Activated CD8-positive, alpha-beta T cell treated with anti-CD3 and anti-CD28 coated beads for 36 hours (primary cell): ENCODE measurements at regions of chr17 and their contacts with region 1.

Region 1: DNA sequence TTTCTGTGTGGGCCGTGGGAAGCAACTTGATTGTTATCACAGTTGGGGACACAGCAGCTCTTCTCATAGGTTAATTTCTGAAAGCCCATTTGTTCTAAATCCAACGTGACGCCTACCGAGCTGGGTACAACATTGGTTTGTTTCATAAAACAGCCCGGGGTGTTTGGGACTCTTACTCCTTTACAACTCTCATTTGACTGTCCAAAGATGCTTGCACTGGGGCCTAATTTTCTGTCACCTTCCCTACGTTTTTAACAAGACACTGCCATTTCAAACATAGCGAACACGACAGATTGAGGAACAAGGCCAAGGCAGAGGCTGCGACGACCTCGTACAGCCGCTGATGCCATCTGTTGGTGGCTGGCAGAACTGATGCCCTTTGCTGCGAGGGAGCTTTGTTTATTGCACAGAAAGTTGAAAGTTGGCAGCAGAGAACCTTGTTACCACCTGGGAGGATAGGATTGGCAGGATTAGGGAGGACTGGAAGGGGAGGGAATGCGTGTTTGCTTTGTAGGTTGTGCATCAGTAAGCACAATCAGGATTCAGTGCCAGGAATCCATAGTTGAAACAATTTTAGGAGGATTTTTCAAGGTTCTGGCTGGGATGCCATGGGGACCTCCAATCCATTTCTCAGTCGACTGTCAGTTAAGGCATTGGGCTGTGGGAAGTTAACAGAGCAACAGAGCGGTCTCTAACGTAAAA is 98.3 kb downstream of the PITPNC1 start:
- DNase-seq: peak; percentile 92
- ATAC-seq: peak; percentile 71
- H3K4me3 Mint-ChIP-seq: peak overlapping the region; percentile 68
- H3K27ac Mint-ChIP-seq: peak overlapping the region; percentile 92
- H3K4me1 Mint-ChIP-seq: peaks cover 67% of the 10 kb centered on the region
- H3K27me3 Mint-ChIP-seq: no peaks in the 10 kb centered on the region
- CTCF ChIP-seq: peak; percentile 87

Region 2: GRCh38 chr17:67260170-67261011 is 215.0 kb before region 1 on chr17:
- CTCF ChIA-PET with region 1: no interaction called
- POLR2A ChIA-PET with region 1: no interaction called
- intact Hi-C with region 1: no loop called
- DNase-seq: no peak
- ATAC-seq: no peak
- H3K4me3 Mint-ChIP-seq: no peak overlapping the region
- H3K27ac Mint-ChIP-seq: no peak overlapping the region
- H3K4me1 Mint-ChIP-seq: peaks cover 24% of the 10 kb centered on the region
- H3K27me3 Mint-ChIP-seq: no peaks in the 10 kb centered on the region
- CTCF ChIP-seq: no peak

Region 3: GRCh38 chr17:67272312-67273050 is 202.9 kb before region 1 on chr17:
- CTCF ChIA-PET with region 1: no interaction called
- POLR2A ChIA-PET with region 1: no interaction called
- intact Hi-C with region 1: no loop called
- DNase-seq: peak; percentile 33
- ATAC-seq: no peak
- H3K4me3 Mint-ChIP-seq: no peak overlapping the region
- H3K27ac Mint-ChIP-seq: no peak overlapping the region
- H3K4me1 Mint-ChIP-seq: no peaks in the 10 kb centered on the region
- H3K27me3 Mint-ChIP-seq: no peaks in the 10 kb centered on the region
- CTCF ChIP-seq: no peak

Region 4: DNA sequence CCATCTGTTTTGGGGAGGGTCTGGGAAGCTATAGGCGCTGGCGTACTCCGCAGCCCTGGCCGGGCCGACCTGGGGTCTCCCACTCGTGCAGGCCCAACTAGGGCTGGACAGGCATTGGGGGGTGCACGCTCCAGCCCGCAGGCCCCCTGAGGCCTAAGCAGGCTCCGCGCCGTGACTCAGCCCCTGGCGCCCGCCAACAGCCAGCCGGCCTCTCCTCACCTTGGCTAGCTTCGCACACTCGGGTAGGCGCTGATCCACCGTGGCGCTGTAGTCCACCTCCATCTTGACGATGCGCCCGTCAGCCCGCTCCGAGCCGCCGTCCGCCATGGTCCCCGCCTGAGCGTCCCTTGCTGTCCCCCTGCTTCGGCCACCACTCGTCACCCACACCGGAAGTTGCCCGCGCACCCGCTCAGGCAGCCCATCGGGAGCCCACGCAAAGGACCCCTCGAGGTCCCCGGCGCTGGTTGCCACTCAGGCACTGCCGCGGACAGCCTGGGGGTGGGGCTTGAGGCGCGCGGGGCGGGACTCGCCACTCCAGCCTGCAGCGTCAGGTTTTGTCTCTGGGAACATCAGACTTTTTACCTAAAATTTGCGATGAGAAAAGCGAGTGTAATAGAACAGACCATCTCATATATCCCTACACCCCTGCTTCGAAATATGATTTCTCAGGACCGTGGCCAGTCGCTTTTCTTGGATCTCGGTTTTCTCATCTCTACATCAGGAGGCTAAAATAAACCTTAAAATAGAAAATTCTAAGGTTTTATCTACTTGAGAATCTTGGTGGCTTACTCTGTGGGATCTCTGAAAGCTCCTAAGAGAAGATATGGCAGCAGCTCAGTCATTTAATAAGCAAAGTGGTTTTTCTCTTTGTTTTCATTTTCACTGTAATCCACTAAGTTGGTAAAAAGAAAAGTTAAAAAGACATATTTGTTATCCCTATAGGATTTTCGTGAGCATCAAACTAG is 108.9 kb before region 1 on chr17 and contains the start of gene PSMD12:
- CTCF ChIA-PET with region 1: interaction called, 201 read pairs
- POLR2A ChIA-PET with region 1: interaction called, 3 read pairs
- intact Hi-C with region 1: no loop called
- DNase-seq: peak; percentile 94
- ATAC-seq: peak; percentile 94
- H3K4me3 Mint-ChIP-seq: peak within 1 kb of the TSS; percentile 97
- H3K27ac Mint-ChIP-seq: peak within 1 kb of the TSS; percentile 96
- H3K4me1 Mint-ChIP-seq: peaks cover 43% of the 10 kb centered on the region
- H3K27me3 Mint-ChIP-seq: no peaks in the 10 kb centered on the region
- CTCF ChIP-seq: no peak
- total RNA-seq, gene PSMD12: 80.9 to 89.1 TPM

Region 5: DNA sequence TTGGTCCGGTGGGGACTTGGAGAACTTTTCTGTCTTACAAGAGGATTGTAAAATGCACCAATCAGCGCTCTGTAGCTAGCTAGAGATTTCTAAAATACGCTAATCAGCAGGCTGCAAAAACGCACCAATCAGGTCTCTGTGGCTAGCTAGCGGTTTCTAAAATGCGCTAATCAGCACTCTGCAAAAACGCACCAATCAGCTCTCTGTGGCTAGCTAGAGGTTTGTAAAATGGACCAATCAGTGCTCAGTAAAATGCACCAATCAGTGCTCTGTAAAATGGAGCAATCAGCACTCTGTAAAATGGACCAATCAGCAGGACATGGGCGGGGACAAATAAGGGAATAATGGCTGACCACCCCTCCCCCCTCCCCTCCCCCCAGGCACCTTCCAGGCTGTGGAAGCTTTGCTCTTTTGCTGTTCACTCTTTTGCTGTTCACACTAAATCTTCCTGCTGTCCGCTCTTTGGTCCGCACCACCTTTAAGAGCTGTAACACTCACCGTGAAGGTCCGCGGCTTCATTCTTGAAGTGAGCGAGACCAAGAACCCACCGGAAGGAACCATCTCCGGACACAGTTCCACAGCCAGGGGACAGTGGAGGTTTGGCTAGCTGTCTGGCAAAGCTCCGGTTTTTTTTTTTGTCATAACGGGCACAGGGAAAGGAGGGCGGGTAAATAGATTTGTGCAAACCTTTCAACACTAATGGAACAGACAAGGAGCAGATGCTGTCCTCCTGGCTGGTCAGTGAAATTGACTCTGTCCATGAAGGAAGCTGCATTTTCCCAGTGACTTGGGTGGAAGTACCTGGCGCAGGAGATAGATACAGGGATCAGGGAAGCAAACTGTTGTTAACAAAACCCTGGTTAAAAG is 90.0 kb before region 1 on chr17:
- CTCF ChIA-PET with region 1: interaction called, 201 read pairs
- POLR2A ChIA-PET with region 1: interaction called, 86 read pairs
- intact Hi-C with region 1: loop called (anchors 2 kb)
- DNase-seq: no peak
- ATAC-seq: no peak
- H3K4me3 Mint-ChIP-seq: no peak overlapping the region
- H3K27ac Mint-ChIP-seq: peak overlapping the region; percentile 80
- H3K4me1 Mint-ChIP-seq: peaks cover 69% of the 10 kb centered on the region
- H3K27me3 Mint-ChIP-seq: no peaks in the 10 kb centered on the region
- CTCF ChIP-seq: no peak

Region 6: DNA sequence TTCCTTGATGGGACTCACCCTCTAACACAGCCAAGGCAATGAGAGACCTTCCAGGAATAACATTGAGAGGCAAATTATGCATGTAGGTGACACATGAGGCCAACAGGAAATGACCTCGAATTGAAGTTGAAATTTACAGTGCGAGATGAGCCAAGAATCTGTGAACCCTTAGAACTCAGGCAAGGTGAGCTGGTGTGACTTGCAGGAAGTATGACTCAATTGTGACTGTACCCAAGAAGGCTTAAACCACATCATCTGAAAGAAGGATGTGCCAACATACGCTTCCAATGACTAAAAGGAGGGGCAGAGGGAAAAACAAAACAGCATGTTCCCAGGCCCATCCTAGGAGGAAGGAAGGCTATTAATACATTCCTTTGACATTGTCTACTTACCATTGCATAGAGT is 53.5 kb before region 1 on chr17:
- CTCF ChIA-PET with region 1: interaction called, 16 read pairs
- POLR2A ChIA-PET with region 1: interaction called, 6 read pairs
- intact Hi-C with region 1: no loop called
- DNase-seq: peak; percentile 71
- ATAC-seq: peak; percentile 95
- H3K4me3 Mint-ChIP-seq: peak overlapping the region; percentile 33
- H3K27ac Mint-ChIP-seq: peak overlapping the region; percentile 88
- H3K4me1 Mint-ChIP-seq: peaks cover 86% of the 10 kb centered on the region
- H3K27me3 Mint-ChIP-seq: no peaks in the 10 kb centered on the region
- CTCF ChIP-seq: no peak

Region 7: GRCh38 chr17:67431249-67432048 is 43.9 kb before region 1 on chr17:
- CTCF ChIA-PET with region 1: interaction called, 52 read pairs
- POLR2A ChIA-PET with region 1: interaction called, 25 read pairs
- intact Hi-C with region 1: loop called (anchors 5 kb)
- DNase-seq: peak; percentile 36
- ATAC-seq: peak; percentile 69
- H3K4me3 Mint-ChIP-seq: peak overlapping the region; percentile 6
- H3K27ac Mint-ChIP-seq: peak overlapping the region; percentile 84
- H3K4me1 Mint-ChIP-seq: peaks cover 69% of the 10 kb centered on the region
- H3K27me3 Mint-ChIP-seq: no peaks in the 10 kb centered on the region
- CTCF ChIP-seq: no peak

Region 8: GRCh38 chr17:67441052-67441927 is 34.1 kb before region 1 on chr17:
- CTCF ChIA-PET with region 1: interaction called, 34 read pairs
- POLR2A ChIA-PET with region 1: interaction called, 39 read pairs
- intact Hi-C with region 1: no loop called
- DNase-seq: peak; percentile 90
- ATAC-seq: peak; percentile 90
- H3K4me3 Mint-ChIP-seq: peak overlapping the region; percentile 77
- H3K27ac Mint-ChIP-seq: peak overlapping the region; percentile 97
- H3K4me1 Mint-ChIP-seq: peaks cover 71% of the 10 kb centered on the region
- H3K27me3 Mint-ChIP-seq: no peaks in the 10 kb centered on the region
- CTCF ChIP-seq: no peak

Region 9: GRCh38 chr17:67452681-67453554 is 22.5 kb before region 1 on chr17:
- CTCF ChIA-PET with region 1: interaction called, 22 read pairs
- POLR2A ChIA-PET with region 1: interaction called, 7 read pairs
- intact Hi-C with region 1: no loop called
- DNase-seq: peak; percentile 62
- ATAC-seq: peak; percentile 82
- H3K4me3 Mint-ChIP-seq: peak overlapping the region; percentile 72
- H3K27ac Mint-ChIP-seq: peak overlapping the region; percentile 98
- H3K4me1 Mint-ChIP-seq: peaks cover 83% of the 10 kb centered on the region
- H3K27me3 Mint-ChIP-seq: no peaks in the 10 kb centered on the region
- CTCF ChIP-seq: no peak